Breast epithelium (tissue), 4 donors: ENCODE measurements at regions of chr22 and their contacts with region 1.

Region 1: GRCh38 chr22:37734964-37735451 is 38.2 kb downstream of the TRIOBP start:
- DNase-seq: no peak
- H3K4me3 ChIP-seq: no peak overlapping the region
- H3K27ac ChIP-seq: no peak overlapping the region
- H3K4me1 ChIP-seq: no peaks in the 10 kb centered on the region
- H3K27me3 ChIP-seq: no peaks in the 10 kb centered on the region
- CTCF ChIP-seq: no peak
- POLR2A ChIP-seq: no peak

Region 2: GRCh38 chr22:37148742-37149665 is 586.0 kb before region 1 on chr22:
- intact Hi-C with region 1: no loop called
- DNase-seq: no peak
- H3K4me3 ChIP-seq: peak overlapping the region in 2 of 3 donors; percentile 15 to 22
- H3K27ac ChIP-seq: no peak overlapping the region
- H3K4me1 ChIP-seq: no peaks in the 10 kb centered on the region
- H3K27me3 ChIP-seq: no peaks in the 10 kb centered on the region
- CTCF ChIP-seq: no peak
- POLR2A ChIP-seq: no peak

Region 3: GRCh38 chr22:37686002-37686982 is 48.7 kb before region 1 on chr22 and contains the start of gene NOL12:
- intact Hi-C with region 1: loop called (anchors 5 kb)
- DNase-seq: peak; percentile 71 to 83
- H3K4me3 ChIP-seq: peak within 1 kb of the TSS; percentile 82 to 92 (median 85)
- H3K27ac ChIP-seq: peak within 1 kb of the TSS; percentile 91 to 93
- H3K4me1 ChIP-seq: peaks cover 0 to 20% of the 10 kb centered on the region in 2 donors
- H3K27me3 ChIP-seq: no peaks in the 10 kb centered on the region
- CTCF ChIP-seq: peak in 1 of 3 donors; percentile 24
- POLR2A ChIP-seq: no peak
- total RNA-seq, gene NOL12: 24.5 to 29.4 (median 24.6) TPM

Region 4: DNA sequence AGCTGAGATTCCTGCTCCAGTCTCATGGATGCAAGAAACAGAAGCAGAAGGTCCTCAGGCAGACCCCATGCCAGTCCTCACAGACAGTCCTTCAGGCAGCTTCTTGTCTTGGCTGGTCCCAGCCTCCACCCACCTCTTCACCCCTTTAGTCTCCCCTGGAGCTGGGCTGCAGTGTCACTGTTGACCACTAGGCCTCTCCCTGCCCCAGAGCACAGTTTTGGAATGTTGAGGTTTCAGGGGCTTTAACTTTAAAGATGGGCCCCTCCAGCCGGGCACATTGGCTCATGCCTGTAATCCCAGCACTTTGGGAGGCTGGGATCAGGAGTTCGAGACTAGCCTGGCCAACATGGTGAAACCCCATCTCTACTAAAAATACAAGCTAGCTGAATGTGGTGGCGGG is 33.3 kb after region 1 on chr22:
- intact Hi-C with region 1: no loop called
- DNase-seq: no peak
- H3K4me3 ChIP-seq: no peak overlapping the region
- H3K27ac ChIP-seq: no peak overlapping the region
- H3K4me1 ChIP-seq: no peaks in the 10 kb centered on the region
- H3K27me3 ChIP-seq: no peaks in the 10 kb centered on the region
- CTCF ChIP-seq: no peak
- POLR2A ChIP-seq: no peak